ENCODE measurements at regions of chr1 and their contacts with region 1.

Region 1: GRCh38 chr1:3717715-3718601 is 34.3 kb upstream of the CCDC27 start:
- DNase-seq: no peak
- ATAC-seq: no peak
- H3K4me3 ChIP-seq: no peak overlapping the region
- H3K27ac ChIP-seq: no peak overlapping the region
- H3K4me1 ChIP-seq: no peaks in the 10 kb centered on the region
- CTCF ChIP-seq: no peak
- EP300 ChIP-seq: no peak
- POLR2A ChIP-seq: no peak
- RAD21 ChIP-seq: no peak

Region 2: GRCh38 chr1:3403388-3404231 is 314.3 kb before region 1 on chr1:
- CTCF ChIA-PET with region 1: no interaction called
- POLR2A ChIA-PET with region 1: no interaction called
- DNase-seq: no peak
- ATAC-seq: peak in 1 of 2 experiments; percentile 80; a peak in 3 of 6 replicates
- H3K4me3 ChIP-seq: no peak overlapping the region
- H3K27ac ChIP-seq: no peak overlapping the region
- H3K4me1 ChIP-seq: no peaks in the 10 kb centered on the region
- CTCF ChIP-seq: no peak
- EP300 ChIP-seq: no peak
- POLR2A ChIP-seq: no peak
- RAD21 ChIP-seq: no peak

Region 3: DNA sequence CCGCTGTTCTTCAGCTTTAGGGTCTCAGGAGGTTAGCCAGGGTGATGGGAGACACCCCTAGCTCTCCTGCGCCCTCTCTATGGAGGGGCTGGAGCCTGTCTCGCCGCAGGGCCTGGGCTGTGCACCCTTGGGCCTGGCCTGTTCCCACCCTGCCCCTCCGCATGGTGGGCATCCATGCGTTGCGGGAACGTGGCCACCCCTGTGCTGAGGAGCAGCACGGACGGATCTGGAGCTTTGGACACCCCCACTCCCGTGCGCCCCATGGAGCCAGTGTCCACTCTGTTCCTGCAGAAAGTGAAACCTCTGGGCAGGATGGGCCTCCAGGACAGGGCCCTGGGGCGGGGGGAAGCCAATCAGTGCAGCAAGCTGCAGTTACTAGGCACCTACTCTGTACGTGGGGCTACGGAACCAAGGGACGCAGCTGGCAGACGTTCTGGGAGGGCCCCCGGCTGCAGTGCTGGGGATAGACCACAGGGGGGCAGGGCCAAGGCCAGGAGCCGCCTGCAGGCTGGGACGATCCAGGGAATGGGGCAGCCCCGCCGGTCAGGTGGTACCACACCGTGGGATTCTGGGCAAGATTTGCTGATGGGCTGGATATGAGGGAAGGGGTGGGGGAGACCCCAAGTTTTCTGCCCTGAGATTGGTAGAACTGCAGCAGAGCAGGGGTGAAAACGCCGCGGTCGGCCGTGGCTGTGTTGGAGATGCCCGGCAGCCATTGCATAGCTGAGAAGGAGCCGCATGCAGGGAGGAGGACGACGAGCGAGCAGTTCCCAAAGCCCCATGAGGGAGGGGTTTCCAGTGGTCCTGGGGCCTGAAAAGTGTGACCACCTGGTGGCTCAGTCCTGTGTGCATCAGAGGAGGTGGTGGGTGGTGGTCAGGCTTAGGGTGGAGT is 22.4 kb before region 1 on chr1:
- CTCF ChIA-PET with region 1: interaction called, 15 read pairs
- POLR2A ChIA-PET with region 1: no interaction called
- DNase-seq: peak; percentile 40 to 76
- ATAC-seq: peak; percentile 91 to 98
- H3K4me3 ChIP-seq: peak overlapping the region; percentile 39
- H3K27ac ChIP-seq: peak overlapping the region; percentile 29 to 79; a peak in 5 of 6 replicates
- H3K4me1 ChIP-seq: no peaks in the 10 kb centered on the region; the same call in 2 of the 3 replicates
- CTCF ChIP-seq: peak; percentile 53
- EP300 ChIP-seq: no peak
- POLR2A ChIP-seq: no peak
- RAD21 ChIP-seq: peak; percentile 29 to 37; a peak in 3 of 5 replicates

Region 4: DNA sequence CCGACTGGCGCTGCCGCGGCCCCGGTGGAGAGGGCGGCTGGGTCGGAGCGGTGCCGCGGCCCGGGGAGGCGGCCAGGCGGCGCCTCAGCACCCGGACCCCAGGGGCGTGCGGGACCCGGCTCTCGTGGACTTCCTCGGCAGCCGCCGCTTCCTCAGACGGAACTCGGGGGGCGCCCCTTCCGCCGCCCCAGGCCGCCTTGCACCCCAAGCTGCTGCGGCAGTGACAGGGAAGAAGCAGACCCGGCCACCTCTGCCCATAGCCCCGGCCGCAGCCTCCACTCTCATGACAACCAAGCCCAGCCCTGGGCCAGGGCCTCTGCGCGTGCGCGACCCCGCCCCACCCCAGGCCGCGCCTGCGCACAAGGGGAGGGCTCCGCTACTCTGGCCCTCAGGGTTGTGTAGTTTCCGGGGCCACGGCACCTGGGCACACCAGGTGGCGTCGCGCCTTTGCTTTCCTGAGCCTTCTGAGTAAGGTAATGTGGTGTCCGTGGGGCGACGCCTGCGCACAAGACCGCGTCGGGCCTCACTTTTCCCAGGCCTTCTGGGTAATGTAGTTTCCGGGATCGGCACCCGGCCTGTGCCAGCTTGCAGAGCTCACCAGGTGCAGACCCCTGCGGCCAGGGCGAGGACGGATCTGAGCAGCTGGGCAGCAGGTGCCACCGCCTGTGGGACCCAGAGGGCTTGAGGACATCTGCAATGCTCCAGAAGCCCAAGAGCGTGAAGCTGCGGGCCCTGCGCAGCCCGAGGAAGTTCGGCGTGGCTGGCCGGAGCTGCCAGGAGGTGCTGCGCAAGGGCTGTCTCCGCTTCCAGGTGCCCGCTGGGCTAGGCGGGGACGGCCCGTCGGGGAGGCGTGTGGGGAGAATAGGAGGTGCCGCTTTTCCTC is 139.2 kb after region 1 on chr1 and contains the starts of genes CEP104 and DFFB:
- CTCF ChIA-PET with region 1: no interaction called
- POLR2A ChIA-PET with region 1: no interaction called
- DNase-seq: peak; percentile 96
- ATAC-seq: peak; percentile 96 to 97
- H3K4me3 ChIP-seq: peak within 1 kb of the TSS; percentile 85
- H3K27ac ChIP-seq: peak within 1 kb of the TSS; percentile 78 to 92
- H3K4me1 ChIP-seq: peaks cover 9% of the 10 kb centered on the region; the same call in 1 of the 3 replicates
- CTCF ChIP-seq: peak; percentile 36; the same call in 2 of the 3 replicates
- EP300 ChIP-seq: no peak
- POLR2A ChIP-seq: peak; percentile 57
- RAD21 ChIP-seq: peak; percentile 30 to 50; a peak in 3 of 5 replicates
- polyA plus RNA-seq, gene CEP104: 28.8 and 28.9 TPM in 2 replicates
- polyA plus RNA-seq, gene DFFB: 2.5 and 3.2 TPM in 2 replicates